Naive thymus-derived CD8-positive, alpha-beta T cell (primary cell): ENCODE measurements at regions of chr1 and their contacts with region 1.

Region 1: DNA sequence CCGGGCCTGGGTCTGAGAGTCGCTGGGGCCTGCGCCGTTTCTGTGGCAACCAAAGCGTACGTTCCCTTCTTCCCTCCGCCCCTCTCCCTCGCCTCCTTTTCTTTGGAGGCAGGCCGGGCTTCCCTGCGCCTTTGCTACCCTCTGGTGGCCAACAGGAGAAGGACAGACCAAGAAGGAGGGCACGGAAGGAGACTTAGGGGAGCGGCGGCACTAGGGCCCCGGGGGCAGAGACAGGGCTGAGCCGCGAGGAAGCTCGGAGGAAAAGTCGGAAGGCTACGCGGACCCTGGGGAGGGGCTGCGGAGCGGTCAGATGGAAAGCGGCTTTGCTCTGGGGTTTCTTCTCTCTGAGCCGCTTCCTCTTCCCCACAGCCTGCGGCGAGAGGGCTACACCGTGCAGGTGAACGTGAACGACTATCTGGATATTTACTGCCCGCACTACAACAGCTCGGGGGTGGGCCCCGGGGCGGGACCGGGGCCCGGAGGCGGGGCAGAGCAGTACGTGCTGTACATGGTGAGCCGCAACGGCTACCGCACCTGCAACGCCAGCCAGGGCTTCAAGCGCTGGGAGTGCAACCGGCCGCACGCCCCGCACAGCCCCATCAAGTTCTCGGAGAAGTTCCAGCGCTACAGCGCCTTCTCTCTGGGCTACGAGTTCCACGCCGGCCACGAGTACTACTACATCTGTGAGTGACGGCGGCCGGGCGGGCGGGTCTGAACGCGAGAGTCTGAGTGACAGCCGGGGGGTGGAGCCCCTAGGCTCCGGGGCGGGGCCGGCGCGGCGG is 6.3 kb downstream of the EFNA3 start:
- DNase-seq: peak; percentile 80 to 99 (median 90)
- ATAC-seq: peak; percentile 79 to 82
- H3K4me3 Mint-ChIP-seq: peak overlapping the region; percentile 92 to 99 (median 96)
- H3K27ac Mint-ChIP-seq: peak overlapping the region; percentile 85 to 98 (median 94)
- H3K4me1 Mint-ChIP-seq: peaks cover 20 to 48% (median 42%) of the 10 kb centered on the region in 4 donors
- H3K27me3 Mint-ChIP-seq: peaks cover 18 to 43% (median 26%) of the 10 kb centered on the region in 5 donors

Region 2: DNA sequence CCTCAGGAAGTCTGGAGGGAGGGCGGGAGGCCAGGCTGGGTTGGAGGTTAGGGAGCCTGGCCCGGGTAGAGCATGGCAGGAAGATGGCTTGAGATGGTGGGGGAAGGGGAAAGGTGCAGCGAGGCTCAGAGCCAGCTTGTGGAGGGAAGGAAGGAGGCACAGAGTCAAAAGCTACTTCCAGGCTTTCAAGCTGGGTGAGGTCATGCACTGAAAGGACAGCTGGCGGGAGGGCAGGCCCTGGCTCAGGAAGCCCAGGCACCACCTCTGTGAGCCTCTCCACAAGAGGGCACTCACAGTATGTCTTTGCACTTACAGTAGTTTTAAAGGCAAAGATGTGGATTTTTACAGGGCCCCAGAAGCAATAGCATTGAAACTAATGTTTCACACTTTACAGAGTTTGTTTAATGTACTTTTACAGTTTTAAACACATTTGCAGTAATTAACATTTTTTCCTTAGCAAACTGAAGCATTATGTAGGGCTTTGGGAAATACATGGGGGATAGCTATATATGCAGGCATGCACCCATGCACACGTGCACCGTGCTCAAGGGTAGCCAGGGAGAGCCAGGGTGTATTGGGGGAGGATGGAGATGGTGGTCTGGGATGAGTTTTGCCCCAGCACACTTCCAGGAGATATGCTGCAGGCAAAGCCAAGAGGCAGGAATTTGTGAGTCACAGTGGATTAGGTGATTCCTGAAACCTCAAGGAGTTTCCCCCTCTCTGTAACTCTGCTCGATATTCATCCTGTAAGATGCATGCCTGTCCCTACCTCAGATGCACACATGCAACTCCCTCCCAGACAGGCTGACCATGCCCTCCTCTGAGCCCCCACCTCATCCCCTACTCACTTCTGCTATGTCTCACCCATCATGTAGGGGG is 39.9 kb before region 1 on chr1:
- POLR2A ChIA-PET with region 1: interaction called, 10 read pairs
- DNase-seq: peak in 9 of 10 donors; percentile 40 to 82 (median 59)
- ATAC-seq: peak; percentile 95 to 99
- H3K4me3 Mint-ChIP-seq: no peak overlapping the region
- H3K27ac Mint-ChIP-seq: peak overlapping the region in 1 of 10 donors; percentile 17
- H3K4me1 Mint-ChIP-seq: peaks cover 3 to 11% (median 7%) of the 10 kb centered on the region in 4 donors
- H3K27me3 Mint-ChIP-seq: peaks cover 0 to 2% (median 2%) of the 10 kb centered on the region in 5 donors

Region 3: GRCh38 chr1:155050560-155051341 is 34.2 kb before region 1 on chr1 and contains the start of gene ADAM15:
- POLR2A ChIA-PET with region 1: interaction called, 11 read pairs
- DNase-seq: peak; percentile 58 to 83 (median 72)
- ATAC-seq: peak; percentile 79 to 85
- H3K4me3 Mint-ChIP-seq: peak within 1 kb of the TSS; percentile 79 to 91 (median 86)
- H3K27ac Mint-ChIP-seq: peak within 1 kb of the TSS; percentile 23 to 86 (median 64)
- H3K4me1 Mint-ChIP-seq: peaks cover 9 to 27% (median 22%) of the 10 kb centered on the region in 4 donors
- H3K27me3 Mint-ChIP-seq: peaks cover 0 to 2% (median 0%) of the 10 kb centered on the region in 5 donors
- polyA plus RNA-seq, gene ADAM15: 2.8 to 4.5 (median 3.1) TPM

Region 4: GRCh38 chr1:155063550-155064110 is 21.3 kb before region 1 on chr1 and contains the start of gene EFNA4:
- POLR2A ChIA-PET with region 1: interaction called, 44 read pairs
- DNase-seq: peak; percentile 67 to 90 (median 80)
- ATAC-seq: peak; percentile 86 to 88
- H3K4me3 Mint-ChIP-seq: peak within 1 kb of the TSS; percentile 81 to 98 (median 96)
- H3K27ac Mint-ChIP-seq: peak within 1 kb of the TSS; percentile 33 to 96 (median 85)
- H3K4me1 Mint-ChIP-seq: peaks cover 21 to 50% (median 36%) of the 10 kb centered on the region in 4 donors
- H3K27me3 Mint-ChIP-seq: no peaks in the 10 kb centered on the region
- polyA plus RNA-seq, gene EFNA4: 1.0 to 2.6 (median 1.1) TPM

Region 5: DNA sequence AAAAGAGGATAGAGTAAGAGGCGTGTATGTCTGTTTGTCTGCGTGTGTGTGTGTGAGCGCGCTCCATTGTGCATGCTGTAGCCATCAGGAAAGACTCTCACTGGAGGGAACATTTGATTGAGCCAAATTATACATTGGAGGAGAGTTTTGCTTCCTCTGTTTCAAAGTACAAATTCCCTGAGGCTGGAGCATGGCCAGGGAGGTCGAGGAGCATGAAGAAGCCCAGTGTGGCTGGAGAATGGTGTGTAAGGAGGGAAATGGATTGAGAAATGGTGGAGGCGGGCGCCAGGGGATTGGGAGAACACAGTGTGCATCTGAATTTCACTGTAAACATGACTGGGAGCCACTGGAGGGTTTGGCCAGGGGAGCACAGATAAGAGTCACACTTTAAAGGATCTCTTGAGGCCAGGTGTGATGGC is 20.7 kb after region 1 on chr1:
- POLR2A ChIA-PET with region 1: no interaction called
- DNase-seq: no peak
- ATAC-seq: no peak
- H3K4me3 Mint-ChIP-seq: no peak overlapping the region
- H3K27ac Mint-ChIP-seq: no peak overlapping the region
- H3K4me1 Mint-ChIP-seq: peaks cover 0 to 6% (median 0%) of the 10 kb centered on the region in 4 donors
- H3K27me3 Mint-ChIP-seq: peaks cover 0 to 2% (median 0%) of the 10 kb centered on the region in 5 donors

Region 6: GRCh38 chr1:155172732-155173477 is 88.0 kb after region 1 on chr1 and contains the start of gene KRTCAP2:
- POLR2A ChIA-PET with region 1: interaction called, 16 read pairs
- DNase-seq: peak; percentile 89 to 97 (median 92)
- ATAC-seq: peak; percentile 80 to 83
- H3K4me3 Mint-ChIP-seq: peak within 1 kb of the TSS; percentile 97 to 100 (median 99)
- H3K27ac Mint-ChIP-seq: peak within 1 kb of the TSS; percentile 98 to 100 (median 99)
- H3K4me1 Mint-ChIP-seq: peaks cover 26 to 54% (median 51%) of the 10 kb centered on the region in 4 donors
- H3K27me3 Mint-ChIP-seq: peaks cover 0 to 2% (median 0%) of the 10 kb centered on the region in 5 donors
- polyA plus RNA-seq, gene KRTCAP2: 453 to 495 (median 490) TPM

Region 7: DNA sequence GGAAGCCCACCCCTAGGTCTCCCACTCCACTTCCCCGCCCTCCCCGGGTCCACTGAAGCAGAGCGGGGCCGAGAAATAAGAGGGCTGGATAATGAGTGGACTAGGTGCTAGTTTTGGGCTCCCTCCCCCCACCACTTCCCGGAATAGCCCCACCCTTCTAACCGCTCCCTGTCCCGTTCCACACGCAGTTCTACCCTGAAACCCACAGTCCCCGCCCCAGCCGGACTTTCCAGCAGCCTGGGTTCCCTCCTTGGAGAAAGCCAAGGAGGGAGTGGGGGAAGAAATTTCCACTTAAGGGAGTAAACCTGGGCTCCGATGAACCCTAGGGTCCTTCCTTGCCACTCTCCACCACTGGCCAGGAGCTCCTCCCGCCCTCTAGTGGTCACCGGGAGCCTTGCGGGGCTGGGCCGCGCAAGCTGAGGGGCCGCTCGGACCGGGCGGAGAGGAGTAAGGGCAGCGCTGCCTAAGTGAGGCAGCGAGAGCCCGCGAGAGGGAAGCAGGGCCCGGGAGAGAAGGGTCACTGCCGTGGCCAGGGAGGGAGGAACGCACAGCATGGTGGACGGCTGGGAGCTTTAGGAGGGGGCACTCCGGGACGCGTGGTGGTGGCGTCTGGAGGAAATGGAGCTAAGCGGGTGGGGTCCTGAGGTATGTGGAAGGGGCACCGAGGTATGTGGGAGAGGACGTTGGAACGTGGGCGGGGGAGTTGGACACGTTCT is 108.5 kb after region 1 on chr1:
- POLR2A ChIA-PET with region 1: interaction called, 10 read pairs
- DNase-seq: peak; percentile 40 to 79 (median 60)
- ATAC-seq: peak; percentile 6 to 17
- H3K4me3 Mint-ChIP-seq: peak overlapping the region; percentile 77 to 97 (median 90)
- H3K27ac Mint-ChIP-seq: peak overlapping the region; percentile 93 to 100 (median 98)
- H3K4me1 Mint-ChIP-seq: peaks cover 18 to 33% (median 26%) of the 10 kb centered on the region in 4 donors
- H3K27me3 Mint-ChIP-seq: peaks cover 0 to 2% (median 0%) of the 10 kb centered on the region in 5 donors